CD4-positive, alpha-beta T cell (primary cell): ENCODE measurements at regions of chr10 and their contacts with region 1.

Region 1: DNA sequence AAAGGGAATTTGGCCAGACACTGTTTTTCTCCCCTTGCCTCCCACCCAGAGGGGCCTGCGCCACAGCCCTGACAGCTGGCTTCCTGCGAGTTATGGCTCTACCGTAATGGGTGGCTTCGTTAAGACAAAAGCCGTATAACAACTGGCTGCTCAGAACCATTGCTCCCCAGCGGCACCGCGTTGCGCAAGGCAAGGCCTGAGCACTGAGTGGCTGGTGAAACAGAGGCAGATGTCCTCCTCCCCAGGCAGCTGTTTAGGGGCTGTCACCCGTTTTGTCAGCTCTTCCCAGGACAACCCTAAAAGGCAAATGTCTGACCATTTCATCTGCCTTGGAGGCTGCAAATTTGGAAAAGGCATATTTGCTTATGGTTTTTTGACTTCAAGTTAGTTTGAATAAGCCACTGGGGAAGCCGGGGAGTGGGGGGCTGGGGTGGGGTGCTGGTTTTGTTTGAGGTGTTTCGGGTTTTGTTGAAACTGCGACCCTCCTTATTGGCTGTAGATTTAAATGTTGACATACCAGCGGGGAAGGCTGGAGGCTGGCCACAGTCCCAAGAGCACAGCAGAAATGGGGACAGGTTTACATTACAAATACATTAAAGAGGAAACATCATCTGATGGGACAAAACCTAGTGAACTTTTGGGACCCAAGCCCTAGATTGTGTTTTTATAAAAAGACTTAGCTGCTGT is 681 bp upstream of the SPOCK2 start:
- DNase-seq: peak; percentile 31 to 82 (median 56)
- ATAC-seq: peak; percentile 46
- H3K4me3 ChIP-seq: peak overlapping the region; percentile 98
- H3K4me3 Mint-ChIP-seq: peak overlapping the region; percentile 100
- H3K27ac ChIP-seq: peak overlapping the region; percentile 96
- H3K27ac Mint-ChIP-seq: peak overlapping the region; percentile 98
- H3K4me1 ChIP-seq: peaks cover 55% of the 10 kb centered on the region
- H3K4me1 Mint-ChIP-seq: peaks cover 56% of the 10 kb centered on the region
- H3K27me3 ChIP-seq: no peaks in the 10 kb centered on the region
- H3K27me3 Mint-ChIP-seq: peaks cover 4% of the 10 kb centered on the region
- CTCF ChIP-seq: no peak

Region 2: GRCh38 chr10:71878327-71879034 is 210.6 kb before region 1 on chr10:
- CTCF ChIA-PET with region 1: no interaction called
- POLR2A ChIA-PET with region 1: no interaction called
- intact Hi-C with region 1: no loop called
- DNase-seq: peak in 7 of 14 experiments; percentile 6 to 46 (median 24)
- ATAC-seq: peak; percentile 65
- H3K4me3 ChIP-seq: no peak overlapping the region
- H3K4me3 Mint-ChIP-seq: peak overlapping the region; percentile 71
- H3K27ac ChIP-seq: no peak overlapping the region
- H3K27ac Mint-ChIP-seq: no peak overlapping the region
- H3K4me1 ChIP-seq: peaks cover 14% of the 10 kb centered on the region
- H3K4me1 Mint-ChIP-seq: peaks cover 24% of the 10 kb centered on the region
- H3K27me3 ChIP-seq: no peaks in the 10 kb centered on the region
- H3K27me3 Mint-ChIP-seq: no peaks in the 10 kb centered on the region
- CTCF ChIP-seq: no peak

Region 3: GRCh38 chr10:72026278-72027111 is 62.5 kb before region 1 on chr10:
- CTCF ChIA-PET with region 1: no interaction called
- POLR2A ChIA-PET with region 1: no interaction called
- intact Hi-C with region 1: no loop called
- DNase-seq: no peak
- ATAC-seq: no peak
- H3K4me3 ChIP-seq: no peak overlapping the region
- H3K4me3 Mint-ChIP-seq: no peak overlapping the region
- H3K27ac ChIP-seq: no peak overlapping the region
- H3K27ac Mint-ChIP-seq: no peak overlapping the region
- H3K4me1 ChIP-seq: no peaks in the 10 kb centered on the region
- H3K4me1 Mint-ChIP-seq: no peaks in the 10 kb centered on the region
- H3K27me3 ChIP-seq: peaks cover 0 to 3% of the 10 kb centered on the region in 2 experiments
- H3K27me3 Mint-ChIP-seq: peaks cover 12% of the 10 kb centered on the region
- CTCF ChIP-seq: no peak

Region 4: GRCh38 chr10:72069751-72070526 is 19.1 kb before region 1 on chr10:
- CTCF ChIA-PET with region 1: no interaction called
- POLR2A ChIA-PET with region 1: interaction called, 28 read pairs
- intact Hi-C with region 1: no loop called
- DNase-seq: no peak
- ATAC-seq: no peak
- H3K4me3 ChIP-seq: no peak overlapping the region
- H3K4me3 Mint-ChIP-seq: peak overlapping the region; percentile 43
- H3K27ac ChIP-seq: peak overlapping the region in 1 of 2 donors; percentile 47
- H3K27ac Mint-ChIP-seq: peak overlapping the region; percentile 85
- H3K4me1 ChIP-seq: peaks cover 50% of the 10 kb centered on the region
- H3K4me1 Mint-ChIP-seq: peaks cover 50% of the 10 kb centered on the region
- H3K27me3 ChIP-seq: no peaks in the 10 kb centered on the region
- H3K27me3 Mint-ChIP-seq: no peaks in the 10 kb centered on the region
- CTCF ChIP-seq: no peak

Region 5: GRCh38 chr10:72126184-72126871 is 37.3 kb after region 1 on chr10:
- CTCF ChIA-PET with region 1: no interaction called
- POLR2A ChIA-PET with region 1: interaction called, 44 read pairs
- intact Hi-C with region 1: loop called (anchors 5 kb)
- DNase-seq: peak in 3 of 14 experiments; percentile 53 to 60 (median 58)
- ATAC-seq: peak; percentile 26
- H3K4me3 ChIP-seq: no peak overlapping the region
- H3K4me3 Mint-ChIP-seq: no peak overlapping the region
- H3K27ac ChIP-seq: no peak overlapping the region
- H3K27ac Mint-ChIP-seq: peak overlapping the region; percentile 43
- H3K4me1 ChIP-seq: peaks cover 11% of the 10 kb centered on the region
- H3K4me1 Mint-ChIP-seq: peaks cover 58% of the 10 kb centered on the region
- H3K27me3 ChIP-seq: no peaks in the 10 kb centered on the region
- H3K27me3 Mint-ChIP-seq: no peaks in the 10 kb centered on the region
- CTCF ChIP-seq: peak; percentile 42

Region 6: GRCh38 chr10:72162978-72163377 is 73.9 kb after region 1 on chr10:
- CTCF ChIA-PET with region 1: no interaction called
- POLR2A ChIA-PET with region 1: interaction called, 3 read pairs
- intact Hi-C with region 1: loop called in 1 of 2 experiments (anchors 5 kb)
- DNase-seq: peak in 3 of 14 experiments; percentile 1 to 26 (median 10)
- ATAC-seq: no peak
- H3K4me3 ChIP-seq: no peak overlapping the region
- H3K4me3 Mint-ChIP-seq: no peak overlapping the region
- H3K27ac ChIP-seq: no peak overlapping the region
- H3K27ac Mint-ChIP-seq: no peak overlapping the region
- H3K4me1 ChIP-seq: no peaks in the 10 kb centered on the region
- H3K4me1 Mint-ChIP-seq: peaks cover 17% of the 10 kb centered on the region
- H3K27me3 ChIP-seq: no peaks in the 10 kb centered on the region
- H3K27me3 Mint-ChIP-seq: no peaks in the 10 kb centered on the region
- CTCF ChIP-seq: no peak

Region 7: GRCh38 chr10:72273410-72274212 is 184.6 kb after region 1 on chr10 and contains the start of gene DDIT4:
- CTCF ChIA-PET with region 1: interaction called, 4 read pairs
- POLR2A ChIA-PET with region 1: interaction called, 10 read pairs
- intact Hi-C with region 1: loop called in 1 of 2 experiments (anchors 1 kb)
- DNase-seq: peak; percentile 94 to 99 (median 97)
- ATAC-seq: peak; percentile 93
- H3K4me3 ChIP-seq: peak within 1 kb of the TSS; percentile 90
- H3K4me3 Mint-ChIP-seq: peak within 1 kb of the TSS; percentile 100
- H3K27ac ChIP-seq: peak within 1 kb of the TSS; percentile 78 to 88
- H3K27ac Mint-ChIP-seq: peak within 1 kb of the TSS; percentile 89
- H3K4me1 ChIP-seq: peaks cover 48% of the 10 kb centered on the region
- H3K4me1 Mint-ChIP-seq: peaks cover 64% of the 10 kb centered on the region
- H3K27me3 ChIP-seq: no peaks in the 10 kb centered on the region
- H3K27me3 Mint-ChIP-seq: no peaks in the 10 kb centered on the region
- CTCF ChIP-seq: no peak
- total RNA-seq, gene DDIT4: 427 to 436 TPM

Region 8: DNA sequence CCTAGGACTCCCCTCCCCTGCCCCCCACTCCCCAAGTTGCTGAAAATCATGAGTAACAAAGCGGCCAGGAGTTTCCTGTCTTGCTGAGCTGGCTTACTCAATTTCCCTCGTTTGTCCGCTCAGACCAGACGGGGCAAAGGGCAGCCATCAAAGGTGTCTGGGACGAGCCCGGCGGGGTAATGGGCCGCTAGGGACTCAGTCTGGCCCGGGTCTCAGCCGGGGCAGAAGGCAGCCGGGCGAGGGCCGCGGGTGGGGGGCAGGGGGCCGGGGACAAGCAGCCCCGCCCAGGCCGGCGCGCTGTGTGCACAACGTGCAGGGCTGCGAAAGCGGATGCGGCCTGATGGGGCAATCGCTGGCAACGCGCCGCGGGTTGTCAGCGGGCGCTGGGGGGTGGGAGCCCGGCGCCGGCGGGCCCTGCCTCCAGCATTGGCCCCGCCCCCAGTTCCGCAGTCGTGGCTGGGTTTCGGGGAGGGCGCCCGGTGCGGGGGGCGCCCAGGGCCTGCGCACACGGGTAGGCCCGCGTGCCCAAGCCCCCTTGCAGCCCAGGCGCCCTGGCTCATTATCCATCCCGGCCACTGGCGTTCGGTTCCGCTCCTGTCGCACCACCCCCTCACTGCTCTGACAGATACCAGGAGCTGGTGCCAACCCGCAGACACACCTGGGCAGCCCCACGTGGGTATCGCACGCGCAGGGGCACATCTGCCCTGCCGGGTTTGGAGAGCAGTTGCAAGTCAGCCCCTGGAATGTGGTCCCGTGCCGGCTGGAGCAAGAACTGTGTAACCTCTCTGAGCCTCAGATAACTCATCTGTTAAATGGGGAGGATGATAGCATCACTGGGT is 230.6 kb after region 1 on chr10:
- CTCF ChIA-PET with region 1: no interaction called
- POLR2A ChIA-PET with region 1: interaction called, 14 read pairs
- intact Hi-C with region 1: no loop called
- DNase-seq: peak; percentile 77 to 95 (median 88)
- ATAC-seq: peak; percentile 65
- H3K4me3 ChIP-seq: peak overlapping the region; percentile 52
- H3K4me3 Mint-ChIP-seq: peak overlapping the region; percentile 57
- H3K27ac ChIP-seq: peak overlapping the region; percentile 86 to 95
- H3K27ac Mint-ChIP-seq: peak overlapping the region; percentile 91
- H3K4me1 ChIP-seq: peaks cover 93% of the 10 kb centered on the region
- H3K4me1 Mint-ChIP-seq: peaks cover 89% of the 10 kb centered on the region
- H3K27me3 ChIP-seq: no peaks in the 10 kb centered on the region
- H3K27me3 Mint-ChIP-seq: no peaks in the 10 kb centered on the region
- CTCF ChIP-seq: no peak

Region 9: GRCh38 chr10:72692057-72692910 is 603.3 kb after region 1 on chr10 and contains the start of gene MCU:
- CTCF ChIA-PET with region 1: no interaction called
- POLR2A ChIA-PET with region 1: no interaction called
- intact Hi-C with region 1: loop called in 1 of 2 experiments (anchors 10 kb)
- DNase-seq: peak; percentile 86 to 96 (median 92)
- ATAC-seq: peak; percentile 96
- H3K4me3 ChIP-seq: peak within 1 kb of the TSS; percentile 79
- H3K4me3 Mint-ChIP-seq: peak within 1 kb of the TSS; percentile 91
- H3K27ac ChIP-seq: peak within 1 kb of the TSS in 1 of 2 donors; percentile 24
- H3K27ac Mint-ChIP-seq: peak within 1 kb of the TSS; percentile 41
- H3K4me1 ChIP-seq: peaks cover 10% of the 10 kb centered on the region
- H3K4me1 Mint-ChIP-seq: peaks cover 43% of the 10 kb centered on the region
- H3K27me3 ChIP-seq: no peaks in the 10 kb centered on the region
- H3K27me3 Mint-ChIP-seq: no peaks in the 10 kb centered on the region
- CTCF ChIP-seq: no peak
- total RNA-seq, gene MCU: 10.3 to 12.0 TPM

Region 10: DNA sequence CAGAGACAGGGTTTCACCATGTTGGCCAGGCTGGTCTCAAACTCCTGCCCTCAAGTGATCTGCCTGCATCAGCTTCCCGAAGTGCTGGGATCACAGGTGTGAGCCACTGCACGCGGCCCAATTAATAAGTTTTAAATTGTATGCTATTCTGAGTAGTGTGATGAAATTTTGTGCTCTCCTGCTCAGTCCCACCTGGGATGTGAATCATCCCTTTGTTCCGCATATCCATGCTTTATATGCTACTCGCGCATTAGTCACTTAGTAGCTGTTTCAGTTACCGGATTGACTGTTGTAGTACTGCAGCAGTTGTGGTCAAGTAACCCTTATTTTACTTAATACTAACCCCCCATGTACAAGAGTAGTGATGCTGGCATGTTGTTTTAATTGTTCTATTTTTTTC is 757.2 kb after region 1 on chr10:
- CTCF ChIA-PET with region 1: no interaction called
- POLR2A ChIA-PET with region 1: no interaction called
- intact Hi-C with region 1: no loop called
- DNase-seq: no peak
- ATAC-seq: no peak
- H3K4me3 ChIP-seq: no peak overlapping the region
- H3K4me3 Mint-ChIP-seq: no peak overlapping the region
- H3K27ac ChIP-seq: no peak overlapping the region
- H3K27ac Mint-ChIP-seq: no peak overlapping the region
- H3K4me1 ChIP-seq: no peaks in the 10 kb centered on the region
- H3K4me1 Mint-ChIP-seq: no peaks in the 10 kb centered on the region
- H3K27me3 ChIP-seq: no peaks in the 10 kb centered on the region
- H3K27me3 Mint-ChIP-seq: no peaks in the 10 kb centered on the region
- CTCF ChIP-seq: no peak

Region 11: DNA sequence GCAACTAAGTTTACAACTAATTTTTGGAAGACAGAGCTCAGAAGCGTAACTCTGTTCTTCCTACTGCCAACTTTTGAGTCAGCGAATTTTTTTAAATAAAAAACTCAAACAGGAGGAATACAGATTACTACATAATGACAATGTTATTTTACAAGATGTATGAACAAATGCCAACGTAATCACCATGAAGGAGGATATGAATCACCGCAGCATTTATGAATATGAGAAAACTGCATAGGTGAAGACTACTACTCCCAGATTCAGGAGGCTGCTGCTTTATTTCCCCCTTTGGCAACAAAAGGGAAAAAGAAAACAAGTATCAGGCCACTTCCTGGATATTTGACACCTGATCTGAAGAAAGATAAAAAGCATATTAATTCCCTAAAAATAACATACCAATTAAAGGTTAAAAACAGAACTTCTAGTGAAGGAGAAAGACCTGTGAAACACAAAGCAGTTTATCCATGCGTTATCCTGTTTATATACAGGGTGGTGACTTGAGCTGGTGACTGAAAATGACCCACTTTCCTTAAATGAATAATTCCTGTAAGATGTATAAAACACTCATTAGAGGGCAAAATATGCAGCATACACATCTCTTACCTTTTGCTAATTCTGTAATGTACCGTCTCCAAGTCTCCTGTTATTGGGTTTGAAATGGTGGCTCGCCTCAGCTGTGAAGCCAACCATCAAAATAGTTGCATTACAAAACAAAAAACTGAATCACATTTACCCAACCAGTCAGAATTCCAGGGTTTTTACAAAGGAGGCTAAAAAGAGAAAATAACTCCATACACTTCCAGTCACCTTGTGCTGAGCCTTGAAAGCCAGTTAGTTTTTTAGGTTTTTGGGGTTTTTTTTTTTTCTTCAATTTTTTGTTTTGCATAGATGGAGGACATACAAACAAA is 955.6 kb after region 1 on chr10:
- CTCF ChIA-PET with region 1: no interaction called
- POLR2A ChIA-PET with region 1: no interaction called
- intact Hi-C with region 1: no loop called
- DNase-seq: no peak
- ATAC-seq: no peak
- H3K4me3 ChIP-seq: no peak overlapping the region
- H3K4me3 Mint-ChIP-seq: no peak overlapping the region
- H3K27ac ChIP-seq: no peak overlapping the region
- H3K27ac Mint-ChIP-seq: no peak overlapping the region
- H3K4me1 ChIP-seq: no peaks in the 10 kb centered on the region
- H3K4me1 Mint-ChIP-seq: no peaks in the 10 kb centered on the region
- H3K27me3 ChIP-seq: no peaks in the 10 kb centered on the region
- H3K27me3 Mint-ChIP-seq: no peaks in the 10 kb centered on the region
- CTCF ChIP-seq: no peak